Panc1 (cell line): ENCODE measurements at regions of chr1 and their contacts with region 1.

Region 1: DNA sequence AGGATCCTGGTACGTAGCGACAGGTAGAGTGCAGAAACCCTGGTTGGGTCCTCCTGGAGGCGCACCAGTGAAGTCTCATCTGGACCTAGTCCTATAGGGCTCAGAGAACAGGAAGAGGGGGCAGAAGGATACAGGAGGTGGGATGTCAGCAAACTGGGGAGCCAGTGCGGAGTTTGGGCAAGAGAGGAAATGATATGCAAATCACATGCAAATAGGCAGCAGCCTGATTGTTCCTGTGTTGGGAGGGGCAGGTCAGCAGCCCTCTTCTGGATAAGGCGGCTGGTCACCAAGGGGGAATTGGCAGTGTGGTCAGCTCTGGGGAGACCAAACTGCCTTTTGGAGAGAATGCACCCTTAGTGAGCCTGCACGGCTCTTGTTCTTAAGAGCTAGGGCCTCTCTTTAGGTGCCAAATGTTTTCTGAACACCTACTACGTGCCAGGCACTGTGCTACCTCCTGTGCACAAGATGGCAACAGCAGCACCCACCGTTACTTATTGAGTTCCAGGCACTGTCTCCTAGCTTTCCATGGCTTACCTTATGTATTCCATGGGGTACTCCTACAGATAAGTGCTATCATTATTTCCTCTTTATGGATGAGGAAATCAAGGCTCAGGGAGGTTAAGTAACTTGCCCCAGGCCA is 18.1 kb upstream of the PADI3 start:
- DNase-seq: no peak
- ATAC-seq: no peak
- H3K4me3 ChIP-seq: no peak overlapping the region
- H3K27ac ChIP-seq: peak overlapping the region; percentile 96
- H3K4me1 ChIP-seq: peaks cover 71% of the 10 kb centered on the region
- H3K27me3 ChIP-seq: no peaks in the 10 kb centered on the region
- CTCF ChIP-seq: no peak

Region 2: GRCh38 chr1:17075470-17076255 is 155.1 kb before region 1 on chr1:
- CTCF ChIA-PET with region 1: no interaction called
- POLR2A ChIA-PET with region 1: no interaction called
- in situ Hi-C with region 1: no loop called
- intact Hi-C with region 1: no loop called
- DNase-seq: no peak
- ATAC-seq: peak; percentile 89
- H3K4me3 ChIP-seq: no peak overlapping the region
- H3K27ac ChIP-seq: no peak overlapping the region
- H3K4me1 ChIP-seq: 0 out of 2 replicates have a peak, but pooled peaks cover 2% of the 10 kb centered on the region
- H3K27me3 ChIP-seq: no peaks in the 10 kb centered on the region
- CTCF ChIP-seq: peak; percentile 87

Region 3: GRCh38 chr1:17186216-17186909 is 44.4 kb before region 1 on chr1:
- CTCF ChIA-PET with region 1: no interaction called
- POLR2A ChIA-PET with region 1: no interaction called
- in situ Hi-C with region 1: no loop called
- intact Hi-C with region 1: loop called (anchors 2 kb)
- DNase-seq: no peak
- ATAC-seq: peak; percentile 37
- H3K4me3 ChIP-seq: no peak overlapping the region
- H3K27ac ChIP-seq: peak overlapping the region; percentile 89
- H3K4me1 ChIP-seq: peaks cover 32% of the 10 kb centered on the region
- H3K27me3 ChIP-seq: no peaks in the 10 kb centered on the region
- CTCF ChIP-seq: no peak